GM13977 (cell line): ENCODE measurements at regions of chr1 and their contacts with region 1.

Region 1: GRCh38 chr1:84620720-84621313 is 46.6 kb upstream of the CTBS start:
- DNase-seq: peak; percentile 88
- CTCF ChIP-seq: peak; percentile 85

Region 2: GRCh38 chr1:84143796-84144565 is 476.8 kb before region 1 on chr1 and contains the start of gene PRKACB:
- in situ Hi-C with region 1: loop called (anchors 25 kb)
- DNase-seq: no peak
- CTCF ChIP-seq: no peak

Region 3: DNA sequence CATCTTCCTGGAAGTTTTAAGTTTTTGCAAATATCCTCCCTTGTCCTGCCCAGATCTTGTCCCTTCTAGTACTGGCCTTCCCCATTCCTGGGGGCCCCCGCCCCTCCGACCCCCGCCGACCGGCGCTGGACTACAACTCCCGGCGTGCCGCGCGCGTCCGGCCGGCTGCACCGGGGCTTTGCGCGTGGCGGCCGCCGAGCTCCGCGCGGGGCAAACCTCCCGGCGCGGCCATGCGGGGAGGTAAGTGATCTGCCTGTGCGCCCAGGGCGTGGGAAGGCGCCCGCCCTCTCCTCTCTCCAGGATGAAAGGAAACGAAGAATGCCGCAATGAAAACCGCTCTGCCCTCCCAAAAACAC is 322.5 kb before region 1 on chr1:
- in situ Hi-C with region 1: loop called (anchors 25 kb)
- DNase-seq: peak; percentile 79
- CTCF ChIP-seq: no peak

Region 4: GRCh38 chr1:84742653-84743052 is 121.8 kb after region 1 on chr1:
- in situ Hi-C with region 1: loop called (anchors 10 kb)
- DNase-seq: no peak
- CTCF ChIP-seq: peak; percentile 5

Region 5: DNA sequence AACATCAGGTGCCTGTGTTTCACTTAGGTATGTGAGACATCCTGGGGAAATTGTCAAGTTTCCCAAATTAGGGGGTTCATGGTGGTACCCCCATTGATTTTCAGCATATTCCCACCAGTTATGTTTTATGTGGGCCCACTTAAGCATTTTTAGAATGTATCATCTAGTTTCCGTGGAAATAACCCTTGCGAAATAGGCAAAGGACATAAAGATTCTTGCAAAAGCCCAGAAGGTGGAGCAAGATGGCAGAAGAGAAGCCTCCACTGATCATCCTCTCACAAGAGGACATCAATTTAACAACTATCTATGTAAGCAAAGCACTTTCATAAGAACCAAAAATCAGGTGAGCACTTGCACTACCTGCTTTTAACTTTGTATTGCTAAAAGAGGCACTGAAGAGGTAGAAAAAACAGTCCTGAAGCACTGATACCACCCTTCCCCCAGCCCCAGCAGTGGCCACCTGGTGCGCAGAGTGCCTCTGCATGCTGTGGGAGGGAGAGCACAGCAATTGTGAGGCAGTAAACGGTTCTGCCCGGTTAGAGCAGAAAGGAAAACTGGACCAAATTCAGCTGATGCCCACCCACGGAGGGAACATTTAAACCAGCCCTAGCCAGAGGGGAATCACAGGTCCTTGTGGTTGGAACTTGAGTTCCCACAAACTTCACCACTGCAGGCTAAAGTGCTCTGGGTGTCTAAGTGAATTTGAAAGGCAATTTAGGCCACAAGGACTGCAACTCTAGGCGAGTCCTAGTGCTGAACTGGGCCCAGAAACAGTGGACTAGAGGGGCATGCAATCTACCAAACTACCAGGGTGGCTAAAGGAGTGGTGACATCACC is 352.9 kb after region 1 on chr1:
- in situ Hi-C with region 1: no loop called
- DNase-seq: no peak
- CTCF ChIP-seq: peak; percentile 38